Mammary epithelial cell (primary cell): ENCODE measurements at regions of chr2 and their contacts with region 1.

Region 1: DNA sequence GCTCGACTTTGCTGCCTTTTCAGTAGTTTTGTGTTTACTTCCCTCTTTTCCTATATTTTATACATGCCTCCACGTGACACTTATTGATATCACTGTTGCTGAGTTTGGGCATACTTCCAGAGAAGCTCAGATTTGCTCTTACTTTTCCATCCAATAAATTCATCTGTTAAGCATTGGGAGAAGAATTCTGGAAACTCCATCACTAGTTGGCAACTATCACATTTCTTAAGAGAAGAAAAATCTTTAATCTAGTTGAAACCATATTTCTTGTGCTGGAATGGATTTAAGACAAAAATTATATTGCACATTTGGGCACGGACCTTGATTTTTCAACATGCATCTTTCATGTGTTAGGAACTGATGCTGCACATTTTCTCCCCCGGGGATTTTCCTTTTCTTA is 52.6 kb upstream of the CPO start:
- DNase-seq: no peak
- H3K4me3 ChIP-seq: no peak overlapping the region
- H3K27ac ChIP-seq: no peak overlapping the region
- H3K4me1 ChIP-seq: no peaks in the 10 kb centered on the region
- H3K27me3 ChIP-seq: no peaks in the 10 kb centered on the region
- CTCF ChIP-seq: no peak

Region 2: DNA sequence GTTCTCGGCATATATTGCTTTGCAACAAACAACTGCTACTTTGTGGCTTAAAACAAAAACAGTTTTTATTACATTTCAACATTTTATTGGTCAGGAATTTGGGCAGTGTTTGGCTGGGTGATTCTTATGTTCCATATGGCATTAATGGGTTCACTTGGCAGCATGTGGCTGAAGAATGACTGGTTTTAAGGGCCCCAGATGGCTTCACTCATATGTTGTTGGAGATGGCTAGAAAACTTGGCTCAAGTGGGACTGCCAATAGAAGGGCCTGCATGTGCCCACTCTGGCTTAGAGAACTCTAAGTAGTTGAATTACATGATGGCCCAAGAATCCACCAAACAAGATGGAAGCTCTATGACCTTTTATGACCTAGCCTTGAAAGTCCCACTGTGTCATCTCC is 35.2 kb before region 1 on chr2:
- CTCF ChIA-PET with region 1: no interaction called
- dilution Hi-C with region 1: loop called (anchors 5 kb)
- in situ Hi-C with region 1: no loop called
- intact Hi-C with region 1: no loop called
- DNase-seq: no peak
- H3K4me3 ChIP-seq: no peak overlapping the region
- H3K27ac ChIP-seq: no peak overlapping the region
- H3K4me1 ChIP-seq: no peaks in the 10 kb centered on the region
- H3K27me3 ChIP-seq: no peaks in the 10 kb centered on the region
- CTCF ChIP-seq: no peak

Region 3: GRCh38 chr2:207008105-207008990 is 121.7 kb after region 1 on chr2:
- CTCF ChIA-PET with region 1: no interaction called
- dilution Hi-C with region 1: no loop called
- in situ Hi-C with region 1: no loop called
- intact Hi-C with region 1: no loop called
- DNase-seq: no peak
- H3K4me3 ChIP-seq: no peak overlapping the region
- H3K27ac ChIP-seq: peak overlapping the region; percentile 13
- H3K4me1 ChIP-seq: peaks cover 31% of the 10 kb centered on the region
- H3K27me3 ChIP-seq: no peaks in the 10 kb centered on the region
- CTCF ChIP-seq: peak; percentile 21 to 42